ENCODE measurements at regions of chr6 and their contacts with region 1.

Region 1: DNA sequence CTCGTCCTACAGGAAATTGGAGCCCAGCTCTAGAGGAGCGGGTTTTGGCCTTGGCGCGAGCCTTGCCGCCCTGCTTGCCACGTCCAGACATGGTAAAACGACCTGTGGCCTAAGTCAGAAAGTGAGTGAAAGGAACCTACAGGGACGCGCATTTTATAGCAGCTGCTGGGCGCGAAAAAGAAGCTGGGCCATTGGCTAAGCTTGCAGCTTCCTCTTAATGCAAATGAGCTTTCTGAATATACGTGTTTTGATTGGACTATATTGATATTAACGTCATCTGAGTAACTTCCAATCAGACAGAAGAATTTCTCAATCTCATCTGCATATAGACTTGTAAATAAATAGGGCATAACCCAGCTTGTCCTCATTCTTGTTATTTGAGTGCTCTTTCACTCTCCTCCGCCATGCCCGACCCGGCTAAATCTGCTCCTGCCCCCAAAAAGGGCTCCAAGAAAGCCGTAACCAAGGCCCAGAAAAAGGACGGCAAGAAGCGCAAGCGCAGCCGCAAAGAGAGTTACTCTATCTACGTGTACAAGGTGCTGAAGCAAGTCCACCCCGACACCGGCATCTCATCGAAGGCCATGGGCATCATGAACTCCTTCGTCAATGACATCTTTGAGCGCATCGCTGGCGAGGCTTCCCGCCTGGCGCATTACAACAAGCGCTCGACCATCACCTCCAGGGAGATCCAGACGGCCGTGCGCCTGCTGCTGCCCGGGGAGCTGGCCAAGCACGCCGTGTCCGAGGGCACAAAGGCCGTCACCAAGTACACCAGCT is 18.9 kb downstream of the OR2B2 start:
- DNase-seq: peak; percentile 86 to 95
- ATAC-seq: peak; percentile 70 to 85 (median 72)
- H3K4me3 ChIP-seq: peak overlapping the region; percentile 58
- H3K4me3 Mint-ChIP-seq: no peak overlapping the region
- H3K27ac ChIP-seq: peak overlapping the region; percentile 76
- H3K27ac Mint-ChIP-seq: no peak overlapping the region
- H3K4me1 ChIP-seq: peaks cover 48% of the 10 kb centered on the region
- H3K4me1 Mint-ChIP-seq: peaks cover 34 to 36% of the 10 kb centered on the region in 2 donors
- H3K27me3 ChIP-seq: no peaks in the 10 kb centered on the region
- H3K27me3 Mint-ChIP-seq: no peaks in the 10 kb centered on the region
- CTCF ChIP-seq: no peak

Region 2: GRCh38 chr6:26285143-26286134 is 1607.8 kb before region 1 on chr6:
- intact Hi-C with region 1: loop called (anchors 5 kb)
- DNase-seq: peak; percentile 83 to 98
- ATAC-seq: peak; percentile 76 to 93 (median 83)
- H3K4me3 ChIP-seq: peak overlapping the region; percentile 70
- H3K4me3 Mint-ChIP-seq: peak overlapping the region; percentile 95
- H3K27ac ChIP-seq: peak overlapping the region; percentile 97
- H3K27ac Mint-ChIP-seq: peak overlapping the region; percentile 98
- H3K4me1 ChIP-seq: peaks cover 17% of the 10 kb centered on the region
- H3K4me1 Mint-ChIP-seq: peaks cover 34 to 37% of the 10 kb centered on the region in 2 donors
- H3K27me3 ChIP-seq: no peaks in the 10 kb centered on the region
- H3K27me3 Mint-ChIP-seq: peaks cover 3 to 8% of the 10 kb centered on the region in 2 donors
- CTCF ChIP-seq: no peak

Region 3: GRCh38 chr6:27177485-27178406 is 715.5 kb before region 1 on chr6:
- intact Hi-C with region 1: loop called (anchors 2 kb)
- DNase-seq: peak; percentile 70 to 86
- ATAC-seq: peak; percentile 79 to 88 (median 83)
- H3K4me3 ChIP-seq: peak overlapping the region; percentile 81
- H3K4me3 Mint-ChIP-seq: peak overlapping the region; percentile 95
- H3K27ac ChIP-seq: peak overlapping the region; percentile 66
- H3K27ac Mint-ChIP-seq: peak overlapping the region; percentile 92 to 98
- H3K4me1 ChIP-seq: peaks cover 13% of the 10 kb centered on the region
- H3K4me1 Mint-ChIP-seq: peaks cover 25 to 26% of the 10 kb centered on the region in 2 donors
- H3K27me3 ChIP-seq: no peaks in the 10 kb centered on the region
- H3K27me3 Mint-ChIP-seq: peaks cover 0 to 9% of the 10 kb centered on the region in 2 donors
- CTCF ChIP-seq: peak; percentile 59

Region 4: GRCh38 chr6:27687154-27688013 is 205.9 kb before region 1 on chr6:
- intact Hi-C with region 1: loop called (anchors 5 kb)
- DNase-seq: peak; percentile 67 to 88
- ATAC-seq: peak; percentile 75 to 83 (median 76)
- H3K4me3 ChIP-seq: peak overlapping the region; percentile 52
- H3K4me3 Mint-ChIP-seq: peak overlapping the region; percentile 95
- H3K27ac ChIP-seq: no peak overlapping the region
- H3K27ac Mint-ChIP-seq: peak overlapping the region; percentile 94 to 96
- H3K4me1 ChIP-seq: peaks cover 12% of the 10 kb centered on the region
- H3K4me1 Mint-ChIP-seq: peaks cover 14 to 22% of the 10 kb centered on the region in 2 donors
- H3K27me3 ChIP-seq: peaks cover 2% of the 10 kb centered on the region
- H3K27me3 Mint-ChIP-seq: peaks cover 8 to 32% of the 10 kb centered on the region in 2 donors
- CTCF ChIP-seq: peak; percentile 53

Region 5: GRCh38 chr6:27838058-27838944 is 54.9 kb before region 1 on chr6:
- intact Hi-C with region 1: loop called (anchors 1 kb)
- DNase-seq: peak; percentile 78 to 97
- ATAC-seq: peak; percentile 66 to 86 (median 79)
- H3K4me3 ChIP-seq: peak overlapping the region; percentile 82
- H3K4me3 Mint-ChIP-seq: no peak overlapping the region
- H3K27ac ChIP-seq: peak overlapping the region; percentile 98
- H3K27ac Mint-ChIP-seq: no peak overlapping the region
- H3K4me1 ChIP-seq: peaks cover 32% of the 10 kb centered on the region
- H3K4me1 Mint-ChIP-seq: peaks cover 6 to 7% of the 10 kb centered on the region in 2 donors
- H3K27me3 ChIP-seq: no peaks in the 10 kb centered on the region
- H3K27me3 Mint-ChIP-seq: no peaks in the 10 kb centered on the region
- CTCF ChIP-seq: no peak

Region 6: DNA sequence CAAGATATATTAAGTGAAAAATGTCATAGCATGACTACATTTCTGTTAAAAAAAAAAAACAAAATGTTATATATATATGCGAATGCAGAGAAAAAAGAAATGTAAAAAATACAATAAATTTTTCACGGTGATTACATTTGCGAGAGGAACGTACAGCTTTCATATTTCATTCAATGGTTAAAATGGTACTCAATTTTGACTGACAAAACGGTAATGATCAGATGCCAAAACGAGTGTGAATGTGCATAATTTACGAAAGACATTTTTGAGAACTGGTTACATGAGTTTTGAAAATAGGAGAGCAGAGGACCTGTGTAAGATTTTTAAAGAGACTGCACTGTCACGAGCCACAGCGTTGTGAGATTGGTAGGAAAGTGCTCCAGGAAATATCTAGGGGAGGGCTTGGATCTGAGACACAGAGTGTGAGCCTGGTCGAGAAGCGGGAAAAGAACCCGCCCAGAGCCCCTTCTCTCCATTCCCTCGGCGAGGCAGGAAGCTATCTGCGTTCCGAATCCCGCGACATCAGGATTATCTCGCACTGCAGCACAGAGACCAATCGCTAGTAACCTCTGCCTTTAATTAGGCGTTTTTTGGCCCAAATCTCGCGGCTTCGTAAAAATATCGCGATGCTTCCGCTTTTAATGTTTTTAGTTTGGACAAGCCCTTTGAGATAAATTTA is 1002.0 kb after region 1 on chr6:
- intact Hi-C with region 1: loop called (anchors 5 kb)
- DNase-seq: peak; percentile 84 to 96
- ATAC-seq: peak; percentile 66 to 84 (median 74)
- H3K4me3 ChIP-seq: peak overlapping the region; percentile 72
- H3K4me3 Mint-ChIP-seq: peak overlapping the region; percentile 97
- H3K27ac ChIP-seq: peak overlapping the region; percentile 96
- H3K27ac Mint-ChIP-seq: peak overlapping the region; percentile 99
- H3K4me1 ChIP-seq: peaks cover 13% of the 10 kb centered on the region
- H3K4me1 Mint-ChIP-seq: peaks cover 24 to 25% of the 10 kb centered on the region in 2 donors
- H3K27me3 ChIP-seq: no peaks in the 10 kb centered on the region
- H3K27me3 Mint-ChIP-seq: no peaks in the 10 kb centered on the region
- CTCF ChIP-seq: no peak

Measured in natural killer cell (primary cell).